ENCODE measurements at regions of chr18 and their contacts with region 1.

Region 1: GRCh38 chr18:6781786-6782185 is 52.3 kb downstream of the ARHGAP28 start:
- DNase-seq: no peak
- ATAC-seq: peak in 6 of 8 donors; percentile 51 to 75 (median 64)
- H3K4me3 ChIP-seq: no peak overlapping the region
- H3K27ac ChIP-seq: peak overlapping the region in 7 of 10 donors; percentile 2 to 56 (median 55)
- H3K4me1 ChIP-seq: peaks cover 4 to 23% (median 16%) of the 10 kb centered on the region in 9 donors
- H3K27me3 ChIP-seq: no peaks in the 10 kb centered on the region
- CTCF ChIP-seq: no peak

Region 2: DNA sequence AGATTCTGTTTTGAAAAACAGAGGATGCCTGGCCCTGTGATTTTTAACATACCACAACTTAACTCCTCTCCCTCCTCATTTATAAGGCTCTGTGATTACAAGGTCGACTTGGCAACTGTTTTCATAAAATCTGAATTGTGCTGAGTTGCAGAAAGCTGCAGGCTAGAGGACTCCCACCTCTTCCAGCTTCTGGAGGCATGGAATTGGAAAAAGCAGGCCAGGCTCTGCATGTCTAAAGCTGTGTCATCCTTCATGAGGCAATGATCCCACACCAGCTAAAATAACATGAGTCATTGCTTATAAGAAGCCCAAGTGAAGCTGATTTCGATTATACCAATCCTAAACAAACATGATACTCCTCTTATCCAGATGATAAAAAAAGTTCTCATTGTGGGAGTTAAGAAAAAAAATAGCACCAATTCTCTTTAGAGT is 40.5 kb before region 1 on chr18:
- intact Hi-C with region 1: loop called in 1 of 10 experiments (anchors 5 kb)
- DNase-seq: peak in 1 of 2 donors; percentile 36
- ATAC-seq: peak; percentile 70 to 98 (median 94)
- H3K4me3 ChIP-seq: no peak overlapping the region
- H3K27ac ChIP-seq: peak overlapping the region in 6 of 10 donors; percentile 0 to 75 (median 32)
- H3K4me1 ChIP-seq: peaks cover 0 to 19% (median 8%) of the 10 kb centered on the region in 9 donors
- H3K27me3 ChIP-seq: no peaks in the 10 kb centered on the region
- CTCF ChIP-seq: no peak

Region 3: DNA sequence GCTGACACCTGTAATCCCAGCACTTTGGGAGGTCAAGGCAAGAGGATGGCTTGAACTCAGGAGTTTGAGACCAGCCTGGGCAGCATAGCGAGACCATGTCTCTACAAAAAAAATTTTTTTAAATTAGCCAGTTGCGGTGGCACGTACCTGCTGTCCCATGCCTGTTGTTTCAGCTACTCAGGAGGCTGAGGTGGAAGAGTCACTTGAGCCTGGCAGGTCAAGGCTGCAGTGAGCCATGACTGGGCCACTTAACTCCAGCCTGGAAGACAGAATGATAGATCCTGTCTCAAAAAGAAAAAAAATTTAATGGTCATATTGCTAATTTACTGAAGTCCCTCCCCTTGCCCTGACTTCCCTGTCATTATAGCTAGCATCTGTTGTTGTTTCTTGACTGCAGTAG is 60.3 kb after region 1 on chr18:
- intact Hi-C with region 1: loop called in 1 of 10 experiments (anchors 10 kb)
- DNase-seq: no peak
- ATAC-seq: no peak
- H3K4me3 ChIP-seq: no peak overlapping the region
- H3K27ac ChIP-seq: no peak overlapping the region
- H3K4me1 ChIP-seq: no peaks in the 10 kb centered on the region
- H3K27me3 ChIP-seq: no peaks in the 10 kb centered on the region
- CTCF ChIP-seq: no peak